AG04450 (cell line): ENCODE measurements at regions of chr1 and their contacts with region 1.

Region 1: GRCh38 chr1:155513300-155513916 is 49.2 kb downstream of the ASH1L start:
- DNase-seq: no peak
- H3K4me3 ChIP-seq: no peak overlapping the region
- H3K27ac ChIP-seq: peak overlapping the region; percentile 52
- H3K27me3 ChIP-seq: no peaks in the 10 kb centered on the region
- CTCF ChIP-seq: peak; percentile 27

Region 2: GRCh38 chr1:155454096-155454495 is 59.3 kb before region 1 on chr1:
- CTCF ChIA-PET with region 1: no interaction called
- POLR2A ChIA-PET with region 1: interaction called, 10 read pairs
- DNase-seq: peak; percentile 18
- H3K4me3 ChIP-seq: no peak overlapping the region
- H3K27ac ChIP-seq: no peak overlapping the region
- H3K27me3 ChIP-seq: no peaks in the 10 kb centered on the region
- CTCF ChIP-seq: no peak

Region 3: DNA sequence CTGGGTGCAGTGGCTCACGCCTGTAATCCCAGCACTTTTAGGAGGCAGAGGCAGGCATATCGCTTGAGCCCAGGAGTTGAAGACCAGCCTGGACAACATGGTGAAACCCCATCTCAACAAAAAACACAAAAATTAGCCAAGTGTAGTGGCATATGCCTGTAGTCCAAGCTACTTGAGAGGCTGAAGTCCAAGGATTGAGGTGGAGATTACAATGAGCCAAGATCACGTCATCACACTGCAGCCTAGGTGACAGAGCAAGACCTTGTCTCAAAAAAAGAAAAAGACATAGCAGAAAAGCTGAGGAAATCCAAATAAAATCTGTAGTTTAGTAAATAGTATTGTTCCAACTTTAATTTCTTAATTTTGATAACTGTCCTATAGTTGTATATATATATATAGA is 60.7 kb after region 1 on chr1:
- CTCF ChIA-PET with region 1: no interaction called
- POLR2A ChIA-PET with region 1: no interaction called
- DNase-seq: no peak
- H3K4me3 ChIP-seq: no peak overlapping the region
- H3K27ac ChIP-seq: no peak overlapping the region
- H3K27me3 ChIP-seq: no peaks in the 10 kb centered on the region
- CTCF ChIP-seq: no peak